T-cell (primary cell): ENCODE measurements at regions of chr6 and their contacts with region 1.

Region 1: DNA sequence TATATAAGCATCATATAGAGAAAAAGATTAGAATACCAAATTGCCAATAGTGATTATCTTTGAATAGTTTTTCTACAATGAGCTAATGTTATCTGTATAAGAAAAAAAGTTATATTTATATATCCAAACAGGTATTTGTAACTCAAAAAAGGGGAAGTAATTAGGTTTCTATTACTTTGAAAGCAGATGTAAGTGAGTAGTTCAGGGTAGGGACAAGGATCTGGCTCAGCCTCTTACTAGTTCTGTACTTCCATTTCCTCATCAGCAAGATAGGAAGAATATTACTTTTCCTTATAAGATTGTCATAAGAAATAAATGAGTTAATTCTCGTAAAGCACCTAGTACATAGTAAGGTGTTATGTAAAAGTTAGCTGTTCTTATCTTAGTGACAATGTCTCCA is 32.2 kb downstream of the AHI1 start:
- DNase-seq: no peak
- ATAC-seq: no peak
- H3K4me3 ChIP-seq: no peak overlapping the region
- H3K4me3 Mint-ChIP-seq: no peak overlapping the region
- H3K27ac ChIP-seq: no peak overlapping the region
- H3K27ac Mint-ChIP-seq: no peak overlapping the region
- H3K4me1 ChIP-seq: no peaks in the 10 kb centered on the region
- H3K4me1 Mint-ChIP-seq: peaks cover 0 to 7% (median 0%) of the 10 kb centered on the region in 3 donors
- H3K27me3 ChIP-seq: no peaks in the 10 kb centered on the region
- H3K27me3 Mint-ChIP-seq: no peaks in the 10 kb centered on the region

Region 2: DNA sequence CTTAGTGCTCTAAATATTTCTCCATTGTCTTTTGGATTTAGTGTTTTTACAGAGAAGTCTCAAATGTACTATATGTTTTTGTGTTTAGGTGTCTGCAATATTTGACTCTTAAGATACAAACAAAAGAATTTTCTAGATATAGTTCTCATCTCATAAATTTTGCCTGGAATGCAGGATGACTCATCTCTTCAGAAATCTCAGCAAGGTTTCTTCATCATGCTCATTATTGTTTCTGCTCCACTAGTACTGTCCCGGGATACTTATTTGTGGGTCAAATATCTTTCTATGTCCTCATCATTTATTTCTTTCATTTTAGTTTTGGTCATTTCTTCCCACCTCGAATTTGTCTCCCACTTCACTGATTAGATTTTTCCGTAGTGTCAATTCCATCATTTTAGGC is 22.7 kb after region 1 on chr6:
- CTCF ChIA-PET with region 1: no interaction called
- POLR2A ChIA-PET with region 1: interaction called, 3 to 15 read pairs
- DNase-seq: no peak
- ATAC-seq: no peak
- H3K4me3 ChIP-seq: no peak overlapping the region
- H3K4me3 Mint-ChIP-seq: no peak overlapping the region
- H3K27ac ChIP-seq: no peak overlapping the region
- H3K27ac Mint-ChIP-seq: no peak overlapping the region
- H3K4me1 ChIP-seq: no peaks in the 10 kb centered on the region
- H3K4me1 Mint-ChIP-seq: no peaks in the 10 kb centered on the region
- H3K27me3 ChIP-seq: no peaks in the 10 kb centered on the region
- H3K27me3 Mint-ChIP-seq: no peaks in the 10 kb centered on the region

Region 3: GRCh38 chr6:135506270-135506997 is 41.1 kb after region 1 on chr6:
- CTCF ChIA-PET with region 1: no interaction called
- POLR2A ChIA-PET with region 1: interaction called in 1 of 2 experiments, 10 read pairs
- DNase-seq: peak in 5 of 35 experiments; percentile 3 to 73 (median 4)
- ATAC-seq: peak; percentile 65 to 80 (median 75)
- H3K4me3 ChIP-seq: no peak overlapping the region
- H3K4me3 Mint-ChIP-seq: no peak overlapping the region
- H3K27ac ChIP-seq: no peak overlapping the region
- H3K27ac Mint-ChIP-seq: no peak overlapping the region
- H3K4me1 ChIP-seq: no peaks in the 10 kb centered on the region
- H3K4me1 Mint-ChIP-seq: peaks cover 0 to 4% (median 2%) of the 10 kb centered on the region in 3 donors
- H3K27me3 ChIP-seq: no peaks in the 10 kb centered on the region
- H3K27me3 Mint-ChIP-seq: no peaks in the 10 kb centered on the region